Astrocyte of the cerebellum (primary cell): ENCODE measurements at regions of chr19 and their contacts with region 1.

Region 1: GRCh38 chr19:53520550-53521372 is 17.2 kb upstream of the ZNF331 start:
- DNase-seq: peak; percentile 96
- H3K4me3 ChIP-seq: peak overlapping the region; percentile 64
- CTCF ChIP-seq: no peak

Region 2: GRCh38 chr19:53431399-53432087 is 89.2 kb before region 1 on chr19 and contains the start of gene ZNF761:
- in situ Hi-C with region 1: loop called (anchors 5 kb)
- DNase-seq: peak; percentile 70
- H3K4me3 ChIP-seq: peak within 1 kb of the TSS; percentile 74
- CTCF ChIP-seq: peak; percentile 38

Region 3: DNA sequence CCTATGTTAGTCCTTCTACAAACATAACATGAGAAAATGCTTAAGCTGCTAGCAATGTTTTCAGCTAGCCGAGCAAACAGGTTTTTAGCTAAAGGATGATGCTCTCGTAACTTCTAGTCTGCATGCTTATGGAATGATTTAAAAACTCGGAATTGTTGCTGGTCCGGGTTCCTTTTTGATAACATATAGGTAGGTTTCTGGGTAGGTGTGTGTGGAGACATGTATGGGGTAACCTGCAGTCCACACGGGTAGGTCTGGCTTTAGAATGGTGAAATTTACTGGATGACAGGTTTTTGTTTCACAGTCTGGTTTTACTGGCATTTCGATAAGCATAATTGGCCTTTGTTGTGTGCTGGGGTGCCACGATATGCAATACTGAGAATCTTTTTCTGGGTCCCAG is 48.8 kb before region 1 on chr19:
- in situ Hi-C with region 1: no loop called
- DNase-seq: no peak
- H3K4me3 ChIP-seq: no peak overlapping the region
- CTCF ChIP-seq: no peak